ENCODE measurements at regions of chr19 and their contacts with region 1.

Region 1: DNA sequence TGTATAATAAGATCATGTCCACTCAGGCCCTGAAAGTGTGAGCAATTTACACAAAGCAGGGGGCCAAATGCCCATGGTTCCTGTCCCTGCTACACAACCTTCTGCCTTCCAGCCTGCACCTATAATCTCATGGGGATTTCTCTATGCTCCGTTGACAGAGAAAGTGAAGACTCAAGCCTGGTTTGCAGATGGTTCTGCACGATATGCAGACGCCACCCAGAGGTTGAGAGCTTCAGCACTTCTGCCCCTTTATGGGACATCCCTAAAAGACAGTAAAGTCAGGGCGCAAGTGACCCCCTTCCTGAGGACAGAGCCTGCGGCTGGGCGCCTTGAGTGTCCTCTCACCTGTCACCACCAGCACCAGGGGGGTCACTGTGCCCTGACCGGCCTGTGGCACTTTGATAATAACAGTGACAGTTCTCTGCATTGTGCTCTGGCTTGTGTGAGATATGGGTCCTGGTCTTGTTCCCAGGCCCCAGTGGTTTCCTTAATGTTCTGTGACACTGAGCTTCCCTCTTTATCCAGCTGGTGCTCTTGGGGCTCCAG is 15.1 kb downstream of the LILRA5 start:
- DNase-seq: no peak
- H3K4me3 Mint-ChIP-seq: no peak overlapping the region
- H3K27ac Mint-ChIP-seq: no peak overlapping the region
- H3K4me1 Mint-ChIP-seq: no peaks in the 10 kb centered on the region
- H3K27me3 Mint-ChIP-seq: peaks cover 6% of the 10 kb centered on the region

Region 2: DNA sequence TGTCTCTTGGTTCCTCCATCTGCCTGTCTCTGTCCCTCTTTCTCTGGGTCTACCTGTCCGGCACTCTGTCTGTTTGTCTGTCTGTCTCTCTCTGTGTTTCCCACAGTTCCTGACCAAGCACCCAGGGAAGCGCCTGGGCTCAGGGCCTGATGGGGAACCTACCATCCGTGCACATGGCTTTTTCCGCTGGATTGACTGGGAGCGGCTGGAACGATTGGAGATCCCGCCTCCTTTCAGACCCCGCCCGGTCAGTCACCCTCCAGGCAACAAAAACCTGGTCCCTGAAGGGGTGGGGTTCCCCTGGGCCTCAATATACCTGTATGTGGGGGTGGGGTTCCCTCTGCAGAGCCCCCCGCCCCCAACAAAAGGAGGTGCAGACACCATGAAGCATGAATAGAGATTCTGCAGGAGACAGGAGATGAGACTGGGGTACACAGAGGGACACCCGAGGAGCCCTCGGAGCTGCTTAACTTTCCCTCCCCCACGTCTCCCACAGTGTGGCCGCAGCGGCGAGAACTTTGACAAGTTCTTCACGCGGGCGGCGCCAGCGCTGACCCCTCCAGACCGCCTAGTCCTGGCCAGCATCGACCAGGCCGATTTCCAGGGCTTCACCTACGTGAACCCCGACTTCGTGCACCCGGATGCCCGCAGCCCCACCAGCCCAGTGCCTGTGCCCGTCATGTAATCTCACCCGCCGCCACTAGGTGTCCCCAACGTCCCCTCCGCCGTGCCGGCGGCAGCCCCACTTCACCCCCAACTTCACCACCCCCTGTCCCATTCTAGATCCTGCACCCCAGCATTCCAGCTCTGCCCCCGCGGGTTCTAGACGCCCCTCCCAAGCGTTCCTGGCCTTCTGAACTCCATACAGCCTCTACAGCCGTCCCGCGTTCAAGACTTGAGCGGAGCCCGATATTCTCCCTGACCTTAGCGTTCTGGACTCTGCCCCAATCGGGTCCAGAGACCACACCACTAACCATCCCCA is 391.3 kb before region 1 on chr19:
- intact Hi-C with region 1: no loop called
- DNase-seq: peak; percentile 92
- H3K4me3 Mint-ChIP-seq: no peak overlapping the region
- H3K27ac Mint-ChIP-seq: no peak overlapping the region
- H3K4me1 Mint-ChIP-seq: peaks cover 17% of the 10 kb centered on the region
- H3K27me3 Mint-ChIP-seq: peaks cover 60% of the 10 kb centered on the region

Region 3: GRCh38 chr19:54309811-54310210 is 12.0 kb after region 1 on chr19:
- intact Hi-C with region 1: loop called (anchors 1 kb)
- DNase-seq: no peak
- H3K4me3 Mint-ChIP-seq: no peak overlapping the region
- H3K27ac Mint-ChIP-seq: no peak overlapping the region
- H3K4me1 Mint-ChIP-seq: peaks cover 3% of the 10 kb centered on the region
- H3K27me3 Mint-ChIP-seq: peaks cover 12% of the 10 kb centered on the region